Left ventricle myocardium superior (tissue), 1 donor: ENCODE measurements at regions of chr7 and their contacts with region 1.

Region 1: DNA sequence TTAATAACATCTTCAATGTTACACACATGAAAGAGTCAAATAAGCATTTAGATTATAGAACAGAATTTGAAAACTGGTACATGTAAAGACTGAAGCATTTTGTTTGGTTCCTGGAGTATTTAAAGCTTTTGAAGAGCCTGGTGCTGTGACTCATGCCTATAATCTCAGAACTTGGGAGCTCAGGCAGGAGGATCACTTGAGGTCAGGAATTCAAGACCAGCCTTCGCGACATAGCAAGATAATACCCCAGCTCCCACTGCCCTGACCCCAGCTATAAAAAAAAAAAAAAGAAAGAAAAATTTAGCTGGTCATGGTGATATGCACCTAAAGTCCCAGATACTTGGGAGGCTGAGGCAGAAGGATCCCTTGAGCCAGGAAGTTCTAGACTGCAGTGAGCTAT is 87.8 kb downstream of the HDAC9 start:
- DNase-seq: no peak
- ATAC-seq: peak; percentile 65

Region 2: GRCh38 chr7:17939606-17940301 is 643.6 kb before region 1 on chr7:
- intact Hi-C with region 1: loop called (anchors 5 kb)
- DNase-seq: peak; percentile 56
- ATAC-seq: peak; percentile 68

Region 3: GRCh38 chr7:18558503-18558902 is 24.8 kb before region 1 on chr7:
- intact Hi-C with region 1: no loop called
- DNase-seq: no peak
- ATAC-seq: no peak